ENCODE measurements at regions of chr6 and their contacts with region 1.

Region 1: DNA sequence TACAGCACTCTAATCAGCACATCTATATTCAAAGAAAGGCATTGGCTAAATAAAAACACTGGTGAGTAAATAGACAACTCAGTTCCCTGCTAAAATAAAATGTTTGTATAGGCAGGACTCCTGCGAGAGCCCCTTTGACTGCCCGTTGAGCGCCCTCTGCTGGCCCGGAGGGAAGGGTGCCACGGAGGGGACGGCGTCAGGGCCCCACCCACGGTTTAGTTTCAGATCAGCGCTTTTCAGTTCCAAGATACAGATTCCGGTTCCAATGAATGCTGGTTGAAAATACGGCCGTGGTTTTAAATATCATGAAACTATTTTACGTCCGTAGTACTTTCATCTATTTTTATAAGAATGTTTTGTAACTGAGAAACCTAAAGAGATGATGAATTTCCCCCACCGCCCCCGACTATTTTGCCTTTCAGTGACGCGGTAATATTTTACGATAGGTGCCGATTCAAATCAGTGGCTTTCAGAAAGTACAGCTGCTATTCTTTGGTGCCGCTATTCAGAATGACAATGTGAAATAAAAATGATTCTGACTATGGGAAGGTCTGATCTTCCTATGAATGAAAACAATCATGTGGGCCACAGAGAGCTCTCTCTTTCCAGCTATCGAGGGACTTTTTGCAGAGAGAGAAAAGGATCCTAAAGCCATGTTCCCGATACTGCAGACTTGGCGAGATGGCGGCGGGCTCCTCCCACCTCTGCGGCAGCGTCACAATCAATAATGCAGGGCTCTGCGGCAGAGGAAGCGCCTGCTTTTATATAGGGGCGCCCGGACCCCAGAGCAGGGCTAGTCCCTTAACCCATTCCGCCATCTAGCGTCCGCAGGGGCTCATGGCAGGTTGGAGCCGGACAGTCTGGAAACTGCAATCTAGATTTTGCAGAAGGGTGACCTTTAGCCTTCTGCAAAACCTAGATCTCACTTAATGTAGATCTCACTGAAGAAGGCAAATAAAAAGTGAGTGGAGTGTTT is 10.6 kb upstream of the CCN6 start:
- DNase-seq: peak; percentile 93
- H3K4me3 Mint-ChIP-seq: peak overlapping the region; percentile 83
- H3K27ac Mint-ChIP-seq: peak overlapping the region; percentile 84
- H3K4me1 Mint-ChIP-seq: no peaks in the 10 kb centered on the region
- H3K27me3 Mint-ChIP-seq: no peaks in the 10 kb centered on the region
- CTCF ChIP-seq: peak; percentile 89

Region 2: GRCh38 chr6:111030008-111031007 is 1013.0 kb before region 1 on chr6:
- CTCF ChIA-PET with region 1: no interaction called
- intact Hi-C with region 1: loop called (anchors 10 kb)
- DNase-seq: no peak
- H3K4me3 Mint-ChIP-seq: no peak overlapping the region
- H3K27ac Mint-ChIP-seq: no peak overlapping the region
- H3K4me1 Mint-ChIP-seq: peaks cover 24% of the 10 kb centered on the region
- H3K27me3 Mint-ChIP-seq: no peaks in the 10 kb centered on the region
- CTCF ChIP-seq: no peak

Region 3: GRCh38 chr6:111483736-111484632 is 559.3 kb before region 1 on chr6:
- CTCF ChIA-PET with region 1: no interaction called
- intact Hi-C with region 1: loop called (anchors 10 kb)
- DNase-seq: peak; percentile 87
- H3K4me3 Mint-ChIP-seq: peak overlapping the region; percentile 93
- H3K27ac Mint-ChIP-seq: peak overlapping the region; percentile 99
- H3K4me1 Mint-ChIP-seq: peaks cover 3% of the 10 kb centered on the region
- H3K27me3 Mint-ChIP-seq: no peaks in the 10 kb centered on the region
- CTCF ChIP-seq: no peak

Region 4: GRCh38 chr6:111662794-111663593 is 380.3 kb before region 1 on chr6:
- CTCF ChIA-PET with region 1: interaction called, 10 read pairs
- intact Hi-C with region 1: no loop called
- DNase-seq: no peak
- H3K4me3 Mint-ChIP-seq: no peak overlapping the region
- H3K27ac Mint-ChIP-seq: no peak overlapping the region
- H3K4me1 Mint-ChIP-seq: no peaks in the 10 kb centered on the region
- H3K27me3 Mint-ChIP-seq: no peaks in the 10 kb centered on the region
- CTCF ChIP-seq: no peak

Region 5: DNA sequence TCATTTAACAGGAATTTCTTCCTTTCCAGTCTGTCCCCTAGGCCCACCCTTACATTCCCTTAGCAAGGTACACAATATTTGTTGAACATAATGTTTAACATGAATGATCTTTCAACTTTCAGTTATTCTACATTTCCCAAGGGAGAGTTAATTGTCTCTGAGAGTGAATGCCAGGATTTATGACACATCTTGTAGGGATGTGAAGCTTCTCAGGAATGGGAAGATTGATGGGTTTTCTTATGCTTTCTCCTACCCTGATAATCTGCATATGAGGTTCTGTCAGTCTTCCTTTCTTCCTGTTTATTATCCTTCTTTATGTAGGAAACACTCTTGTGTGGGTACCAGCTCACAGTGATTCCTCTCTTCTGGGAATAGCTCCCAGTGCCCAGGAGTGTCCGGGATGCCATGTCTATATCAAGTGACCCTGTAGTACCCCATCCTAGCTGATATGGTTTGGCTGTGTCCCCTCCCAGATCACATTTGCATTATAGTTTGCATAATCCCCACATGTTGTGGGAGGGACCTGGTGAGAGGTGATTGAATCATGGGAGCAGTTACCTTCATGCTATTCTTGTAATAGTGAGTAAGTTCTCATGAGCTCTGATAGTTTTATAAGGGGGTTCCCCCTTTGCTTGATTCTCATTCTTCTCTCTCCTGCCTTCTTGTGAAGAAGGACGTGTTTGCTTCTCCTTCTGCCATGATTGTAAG is 163.0 kb before region 1 on chr6:
- CTCF ChIA-PET with region 1: no interaction called
- intact Hi-C with region 1: no loop called
- DNase-seq: no peak
- H3K4me3 Mint-ChIP-seq: no peak overlapping the region
- H3K27ac Mint-ChIP-seq: no peak overlapping the region
- H3K4me1 Mint-ChIP-seq: no peaks in the 10 kb centered on the region
- H3K27me3 Mint-ChIP-seq: no peaks in the 10 kb centered on the region
- CTCF ChIP-seq: no peak

Region 6: GRCh38 chr6:111997078-111997852 is 46.1 kb before region 1 on chr6:
- CTCF ChIA-PET with region 1: no interaction called
- intact Hi-C with region 1: loop called (anchors 2 kb)
- DNase-seq: peak; percentile 82
- H3K4me3 Mint-ChIP-seq: no peak overlapping the region
- H3K27ac Mint-ChIP-seq: no peak overlapping the region
- H3K4me1 Mint-ChIP-seq: peaks cover 13% of the 10 kb centered on the region
- H3K27me3 Mint-ChIP-seq: no peaks in the 10 kb centered on the region
- CTCF ChIP-seq: peak; percentile 67

Region 7: DNA sequence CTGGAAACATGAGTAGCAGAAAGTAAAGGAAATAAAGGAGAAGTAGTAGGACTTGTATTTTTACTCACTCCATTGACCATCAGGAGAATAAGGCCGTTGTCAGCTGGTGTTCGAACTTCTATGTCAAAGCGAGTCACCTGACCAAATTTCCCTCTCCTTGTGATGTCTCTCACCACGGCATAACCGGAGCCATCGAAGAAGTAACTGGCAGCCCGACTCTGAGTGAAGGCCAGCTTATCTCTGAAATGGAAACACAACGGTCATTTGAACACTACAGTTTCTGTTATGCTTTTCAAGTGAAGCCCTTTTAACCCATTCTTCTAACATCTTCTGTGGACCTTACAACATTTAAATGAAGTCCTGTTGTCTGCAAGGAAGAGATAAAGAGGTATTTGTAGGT is 95.7 kb after region 1 on chr6:
- CTCF ChIA-PET with region 1: no interaction called
- intact Hi-C with region 1: no loop called
- DNase-seq: no peak
- H3K4me3 Mint-ChIP-seq: no peak overlapping the region
- H3K27ac Mint-ChIP-seq: no peak overlapping the region
- H3K4me1 Mint-ChIP-seq: no peaks in the 10 kb centered on the region
- H3K27me3 Mint-ChIP-seq: no peaks in the 10 kb centered on the region
- CTCF ChIP-seq: no peak

Region 8: DNA sequence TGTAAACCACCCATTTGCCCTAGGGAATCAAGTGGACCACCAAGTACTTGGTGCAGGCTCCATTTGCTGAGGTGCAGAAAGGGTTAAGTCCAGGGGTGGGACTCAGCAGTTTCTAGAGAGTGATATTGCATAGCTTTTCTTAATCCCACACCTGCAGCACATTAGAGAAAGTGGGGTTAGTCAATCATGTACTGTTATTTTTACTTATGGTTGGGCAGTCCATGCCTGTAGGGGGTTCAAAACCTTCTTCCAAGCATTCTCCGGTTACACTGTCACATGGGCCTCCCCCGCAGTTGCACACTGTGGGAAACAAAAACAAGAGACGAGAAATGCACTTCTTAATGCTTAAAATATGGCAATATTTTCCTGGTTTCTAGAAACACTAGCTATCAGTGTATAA is 145.6 kb after region 1 on chr6:
- CTCF ChIA-PET with region 1: no interaction called
- intact Hi-C with region 1: no loop called
- DNase-seq: no peak
- H3K4me3 Mint-ChIP-seq: no peak overlapping the region
- H3K27ac Mint-ChIP-seq: no peak overlapping the region
- H3K4me1 Mint-ChIP-seq: no peaks in the 10 kb centered on the region
- H3K27me3 Mint-ChIP-seq: no peaks in the 10 kb centered on the region
- CTCF ChIP-seq: no peak

Measured in Calu3 (cell line).